ENCODE measurements at regions of chr18 and their contacts with region 1.

Region 1: DNA sequence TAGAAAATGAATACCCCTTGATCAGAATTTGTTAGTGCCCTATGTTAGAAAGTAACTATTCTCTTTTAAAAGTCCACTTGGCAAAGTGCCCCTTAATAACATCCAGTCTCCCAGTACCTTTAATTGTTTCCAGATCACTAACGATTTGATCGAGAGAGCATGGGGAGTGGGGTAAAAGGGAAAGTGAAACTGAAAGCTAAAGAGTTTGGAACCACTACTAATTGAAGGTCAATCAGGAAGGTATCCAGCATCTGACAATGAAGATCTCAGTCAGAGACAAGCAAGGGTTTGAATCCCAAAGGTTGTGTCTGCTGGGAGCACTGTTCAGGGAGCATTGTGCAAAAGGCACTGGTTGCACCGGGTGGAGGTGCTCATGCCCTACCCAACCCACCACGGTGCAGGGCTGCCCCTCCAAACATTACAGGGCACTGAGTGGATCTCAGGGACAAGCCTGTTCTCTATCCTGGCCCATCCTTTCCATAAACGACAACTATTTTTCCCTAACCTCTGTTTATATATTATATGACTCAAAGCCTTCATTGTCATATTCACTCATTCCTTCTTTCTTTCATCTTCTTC is 14.6 kb upstream of the RIT2 start:
- DNase-seq: no peak
- ATAC-seq: peak in 1 of 8 donors; percentile 28
- H3K4me3 ChIP-seq: peak overlapping the region in 5 of 10 donors; percentile 15 to 52 (median 35)
- H3K27ac ChIP-seq: no peak overlapping the region
- H3K4me1 ChIP-seq: no peaks in the 10 kb centered on the region
- H3K27me3 ChIP-seq: peaks cover 0 to 4% (median 0%) of the 10 kb centered on the region in 7 donors
- CTCF ChIP-seq: no peak

Region 2: GRCh38 chr18:43060020-43060419 is 70.0 kb before region 1 on chr18:
- intact Hi-C with region 1: loop called in 1 of 10 experiments (anchors 10 kb)
- DNase-seq: no peak
- ATAC-seq: no peak
- H3K4me3 ChIP-seq: no peak overlapping the region
- H3K27ac ChIP-seq: no peak overlapping the region
- H3K4me1 ChIP-seq: no peaks in the 10 kb centered on the region
- H3K27me3 ChIP-seq: no peaks in the 10 kb centered on the region
- CTCF ChIP-seq: no peak

Region 3: DNA sequence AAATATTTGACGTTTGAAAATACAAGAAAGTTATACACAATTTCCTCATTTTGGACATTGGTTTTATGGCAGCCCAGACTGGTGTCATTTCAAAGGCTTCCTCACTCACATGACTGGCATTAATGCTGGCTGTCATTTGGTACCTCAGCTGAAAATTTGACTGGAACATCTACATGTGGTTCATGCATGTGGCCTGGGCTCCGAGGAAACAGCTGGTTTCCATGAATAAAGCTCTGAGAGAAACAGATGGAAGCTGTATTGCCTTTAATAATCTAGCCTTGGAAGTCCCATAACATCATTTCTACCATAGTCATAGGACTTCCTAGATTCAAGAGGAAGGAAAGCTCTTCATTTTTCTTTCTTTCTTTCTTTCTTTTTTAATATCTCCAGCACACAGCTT is 28.3 kb after region 1 on chr18:
- intact Hi-C with region 1: no loop called
- DNase-seq: no peak
- ATAC-seq: no peak
- H3K4me3 ChIP-seq: no peak overlapping the region
- H3K27ac ChIP-seq: no peak overlapping the region
- H3K4me1 ChIP-seq: no peaks in the 10 kb centered on the region
- H3K27me3 ChIP-seq: no peaks in the 10 kb centered on the region
- CTCF ChIP-seq: no peak

Region 4: GRCh38 chr18:43180814-43181213 is 50.8 kb after region 1 on chr18:
- intact Hi-C with region 1: no loop called
- DNase-seq: no peak
- ATAC-seq: no peak
- H3K4me3 ChIP-seq: no peak overlapping the region
- H3K27ac ChIP-seq: no peak overlapping the region
- H3K4me1 ChIP-seq: no peaks in the 10 kb centered on the region
- H3K27me3 ChIP-seq: no peaks in the 10 kb centered on the region
- CTCF ChIP-seq: no peak

Region 5: DNA sequence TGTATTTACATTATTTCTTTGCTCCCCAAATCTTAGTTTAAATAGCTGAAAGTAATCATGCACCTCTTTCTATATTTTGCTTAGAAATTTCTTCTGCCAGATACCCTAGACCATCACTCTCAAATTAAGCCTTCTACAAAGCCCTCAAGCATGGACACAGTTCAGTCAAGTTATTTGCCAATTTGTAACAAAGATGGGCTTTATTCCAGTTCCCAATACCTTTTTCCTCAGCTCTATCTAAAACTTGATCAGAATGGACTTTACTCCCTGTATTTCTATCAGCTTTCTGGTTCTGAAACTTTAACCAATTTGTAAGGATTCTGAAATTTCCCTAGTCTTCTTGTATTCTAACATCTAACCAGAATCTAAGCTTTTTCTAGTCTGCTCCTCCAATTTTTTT is 90.7 kb after region 1 on chr18:
- intact Hi-C with region 1: no loop called
- DNase-seq: no peak
- ATAC-seq: no peak
- H3K4me3 ChIP-seq: no peak overlapping the region
- H3K27ac ChIP-seq: no peak overlapping the region
- H3K4me1 ChIP-seq: no peaks in the 10 kb centered on the region
- H3K27me3 ChIP-seq: no peaks in the 10 kb centered on the region
- CTCF ChIP-seq: no peak